ENCODE measurements at regions of chr10 and their contacts with region 1.

Region 1: GRCh38 chr10:130110246-130111112 is at the start of gene C10orf143:
- DNase-seq: peak; percentile 94 to 100 (median 98)
- ATAC-seq: peak; percentile 76 to 78
- H3K4me3 Mint-ChIP-seq: peak within 1 kb of the TSS; percentile 89 to 100 (median 99)
- H3K27ac Mint-ChIP-seq: peak within 1 kb of the TSS; percentile 96 to 99 (median 97)
- H3K4me1 Mint-ChIP-seq: peaks cover 24 to 55% (median 51%) of the 10 kb centered on the region in 4 donors
- H3K27me3 Mint-ChIP-seq: no peaks in the 10 kb centered on the region
- polyA plus RNA-seq, gene C10orf143: 28.6 to 48.1 (median 29.6) TPM

Region 2: GRCh38 chr10:129035052-129035827 is 1075.2 kb before region 1 on chr10:
- POLR2A ChIA-PET with region 1: interaction called, 22 read pairs
- DNase-seq: peak; percentile 45 to 86 (median 66)
- ATAC-seq: peak; percentile 71 to 81
- H3K4me3 Mint-ChIP-seq: peak overlapping the region; percentile 69 to 97 (median 89)
- H3K27ac Mint-ChIP-seq: peak overlapping the region; percentile 80 to 99 (median 98)
- H3K4me1 Mint-ChIP-seq: peaks cover 36 to 79% (median 58%) of the 10 kb centered on the region in 4 donors
- H3K27me3 Mint-ChIP-seq: peaks cover 0 to 29% (median 1%) of the 10 kb centered on the region in 5 donors

Region 3: DNA sequence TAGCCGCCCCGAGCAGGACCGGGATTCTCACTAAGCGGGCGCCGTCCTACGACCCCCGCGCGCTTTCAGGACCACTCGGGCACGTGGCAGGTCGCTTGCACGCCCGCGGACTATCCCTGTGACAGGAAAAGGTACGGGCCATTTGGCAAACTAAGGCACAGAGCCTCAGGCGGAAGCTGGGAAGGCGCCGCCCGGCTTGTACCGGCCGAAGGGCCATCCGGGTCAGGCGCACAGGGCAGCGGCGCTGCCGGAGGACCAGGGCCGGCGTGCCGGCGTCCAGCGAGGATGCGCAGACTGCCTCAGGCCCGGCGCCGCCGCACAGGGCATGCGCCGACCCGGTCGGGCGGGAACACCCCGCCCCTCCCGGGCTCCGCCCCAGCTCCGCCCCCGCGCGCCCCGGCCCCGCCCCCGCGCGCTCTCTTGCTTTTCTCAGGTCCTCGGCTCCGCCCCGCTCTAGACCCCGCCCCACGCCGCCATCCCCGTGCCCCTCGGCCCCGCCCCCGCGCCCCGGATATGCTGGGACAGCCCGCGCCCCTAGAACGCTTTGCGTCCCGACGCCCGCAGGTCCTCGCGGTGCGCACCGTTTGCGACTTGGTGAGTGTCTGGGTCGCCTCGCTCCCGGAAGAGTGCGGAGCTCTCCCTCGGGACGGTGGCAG is 643.6 kb before region 1 on chr10 and contains the start of gene MGMT:
- POLR2A ChIA-PET with region 1: interaction called, 24 read pairs
- DNase-seq: peak; percentile 88 to 100 (median 96)
- ATAC-seq: peak; percentile 95 to 97
- H3K4me3 Mint-ChIP-seq: peak within 1 kb of the TSS; percentile 78 to 88 (median 86)
- H3K27ac Mint-ChIP-seq: peak within 1 kb of the TSS; percentile 28 to 93 (median 90)
- H3K4me1 Mint-ChIP-seq: peaks cover 7 to 32% (median 14%) of the 10 kb centered on the region in 4 donors
- H3K27me3 Mint-ChIP-seq: no peaks in the 10 kb centered on the region
- polyA plus RNA-seq, gene MGMT: 32.2 to 41.7 (median 37.6) TPM

Region 4: DNA sequence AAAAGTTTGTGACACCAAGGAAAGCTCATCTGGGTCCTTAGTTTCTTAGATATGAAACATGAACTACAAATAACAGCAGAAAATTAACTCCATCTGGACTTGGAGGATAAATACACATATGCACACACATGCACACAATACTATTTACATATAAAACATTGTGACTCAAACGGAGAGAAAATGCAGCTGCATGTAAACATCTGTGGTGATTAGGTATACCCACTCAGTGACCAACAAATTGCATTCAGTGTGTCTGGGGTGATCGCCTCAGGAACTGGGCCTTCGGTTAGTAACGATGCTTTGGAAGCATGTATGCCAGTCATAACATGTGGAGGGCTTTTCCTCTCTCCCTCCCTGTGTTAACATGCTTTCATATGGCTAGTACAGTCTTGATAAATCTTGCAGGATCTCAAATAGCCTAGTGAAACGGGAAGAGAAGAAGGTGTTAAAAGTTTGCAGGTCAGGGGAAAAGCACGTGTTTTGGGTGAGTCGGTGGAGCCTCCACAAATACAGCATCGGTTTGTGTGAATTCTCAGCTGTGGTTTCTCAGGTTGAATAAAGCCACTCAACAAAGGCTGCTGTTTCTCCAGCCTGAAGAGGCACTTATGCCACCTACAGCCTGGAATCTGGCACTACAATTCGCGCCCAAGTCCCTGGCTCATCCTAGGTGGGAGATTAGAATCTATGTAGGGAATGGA is 17.0 kb after region 1 on chr10:
- POLR2A ChIA-PET with region 1: interaction called, 14 read pairs
- DNase-seq: peak in 8 of 10 donors; percentile 24 to 60 (median 46)
- ATAC-seq: peak; percentile 91 to 99
- H3K4me3 Mint-ChIP-seq: no peak overlapping the region
- H3K27ac Mint-ChIP-seq: no peak overlapping the region
- H3K4me1 Mint-ChIP-seq: peaks cover 6 to 10% (median 7%) of the 10 kb centered on the region in 4 donors
- H3K27me3 Mint-ChIP-seq: peaks cover 10 to 35% (median 18%) of the 10 kb centered on the region in 5 donors

Region 5: GRCh38 chr10:130136226-130137089 is 26.0 kb after region 1 on chr10 and contains the start of gene GLRX3:
- POLR2A ChIA-PET with region 1: interaction called, 105 read pairs
- DNase-seq: peak; percentile 75 to 96 (median 87)
- ATAC-seq: peak; percentile 93 to 96
- H3K4me3 Mint-ChIP-seq: peak within 1 kb of the TSS; percentile 88 to 96 (median 92)
- H3K27ac Mint-ChIP-seq: peak within 1 kb of the TSS; percentile 59 to 94 (median 90)
- H3K4me1 Mint-ChIP-seq: peaks cover 10 to 46% (median 39%) of the 10 kb centered on the region in 4 donors
- H3K27me3 Mint-ChIP-seq: peaks cover 0 to 10% (median 4%) of the 10 kb centered on the region in 5 donors
- polyA plus RNA-seq, gene GLRX3: 71.5 to 97.8 (median 81.8) TPM

Region 6: GRCh38 chr10:130301021-130301892 is 190.8 kb after region 1 on chr10:
- POLR2A ChIA-PET with region 1: interaction called, 13 read pairs
- DNase-seq: peak; percentile 35 to 82 (median 62)
- ATAC-seq: peak; percentile 72 to 75
- H3K4me3 Mint-ChIP-seq: peak overlapping the region; percentile 20 to 85 (median 74)
- H3K27ac Mint-ChIP-seq: peak overlapping the region in 9 of 10 donors; percentile 46 to 92 (median 71)
- H3K4me1 Mint-ChIP-seq: peaks cover 0 to 10% (median 3%) of the 10 kb centered on the region in 4 donors
- H3K27me3 Mint-ChIP-seq: peaks cover 0 to 12% (median 3%) of the 10 kb centered on the region in 5 donors